Activated T-helper 1 cell treated with anti-CD3 and anti-CD28 coated beads, Interleukin-12 subunit alpha, Interleukin-12 subunit beta, Interleukin-2, Interleukin-4 antibody, amounts not matched to agents 30 ng/mL and 10 ng/mL and 1 ng/mL, durations not matched to agents 14 hours and 24 hours and 36 hours (primary cell): ENCODE measurements at regions of chr2 and their contacts with region 1.

Region 1: DNA sequence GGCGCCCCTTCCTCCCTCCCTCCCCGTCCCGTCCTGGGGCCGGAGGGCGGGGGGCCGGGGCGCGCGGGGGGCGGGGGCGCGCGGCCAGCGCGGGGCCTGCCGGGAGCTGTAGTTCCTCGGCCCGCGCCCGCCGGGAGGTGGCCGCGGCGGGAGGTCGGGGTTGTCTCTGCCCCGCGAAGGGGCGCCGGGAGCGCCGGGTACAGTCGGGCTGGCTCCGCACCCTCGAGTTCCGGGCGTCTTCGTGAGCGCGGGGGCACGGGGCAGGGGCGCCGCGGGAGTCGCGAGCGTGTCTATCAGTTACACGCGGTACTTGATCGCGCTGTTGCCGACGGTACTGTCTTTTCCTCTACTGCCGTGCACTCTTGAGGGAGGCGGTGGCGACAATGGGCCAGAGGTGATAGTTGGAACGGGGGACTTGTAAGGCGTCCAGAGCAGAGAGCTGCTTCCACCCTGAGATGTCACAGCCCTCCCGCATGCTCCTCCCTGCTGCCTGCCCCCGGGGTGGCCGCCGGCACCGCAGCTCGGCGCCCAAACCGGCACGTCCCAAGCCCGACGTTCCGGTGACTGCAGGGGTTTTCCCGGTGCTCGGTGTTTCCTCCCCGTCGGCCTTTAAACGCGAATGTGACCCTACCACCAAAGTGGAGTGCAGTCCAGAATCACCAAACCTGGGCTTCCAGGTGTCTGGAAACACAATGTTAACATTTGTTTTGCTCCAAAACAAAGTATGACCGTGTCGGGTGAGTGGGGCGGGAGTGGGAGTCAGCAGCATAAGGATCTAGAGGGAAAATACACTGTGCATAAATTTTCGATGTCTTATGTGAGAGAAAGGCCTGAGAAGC is at the start of gene PRKD3:
- DNase-seq: peak; percentile 54
- H3K4me3 Mint-ChIP-seq: peak within 1 kb of the TSS; percentile 97
- H3K27ac Mint-ChIP-seq: peak within 1 kb of the TSS; percentile 96
- H3K4me1 Mint-ChIP-seq: peaks cover 37% of the 10 kb centered on the region
- H3K27me3 Mint-ChIP-seq: peaks cover 39% of the 10 kb centered on the region
- total RNA-seq, gene PRKD3: 23.9 and 24.3 TPM in 2 replicates

Region 2: DNA sequence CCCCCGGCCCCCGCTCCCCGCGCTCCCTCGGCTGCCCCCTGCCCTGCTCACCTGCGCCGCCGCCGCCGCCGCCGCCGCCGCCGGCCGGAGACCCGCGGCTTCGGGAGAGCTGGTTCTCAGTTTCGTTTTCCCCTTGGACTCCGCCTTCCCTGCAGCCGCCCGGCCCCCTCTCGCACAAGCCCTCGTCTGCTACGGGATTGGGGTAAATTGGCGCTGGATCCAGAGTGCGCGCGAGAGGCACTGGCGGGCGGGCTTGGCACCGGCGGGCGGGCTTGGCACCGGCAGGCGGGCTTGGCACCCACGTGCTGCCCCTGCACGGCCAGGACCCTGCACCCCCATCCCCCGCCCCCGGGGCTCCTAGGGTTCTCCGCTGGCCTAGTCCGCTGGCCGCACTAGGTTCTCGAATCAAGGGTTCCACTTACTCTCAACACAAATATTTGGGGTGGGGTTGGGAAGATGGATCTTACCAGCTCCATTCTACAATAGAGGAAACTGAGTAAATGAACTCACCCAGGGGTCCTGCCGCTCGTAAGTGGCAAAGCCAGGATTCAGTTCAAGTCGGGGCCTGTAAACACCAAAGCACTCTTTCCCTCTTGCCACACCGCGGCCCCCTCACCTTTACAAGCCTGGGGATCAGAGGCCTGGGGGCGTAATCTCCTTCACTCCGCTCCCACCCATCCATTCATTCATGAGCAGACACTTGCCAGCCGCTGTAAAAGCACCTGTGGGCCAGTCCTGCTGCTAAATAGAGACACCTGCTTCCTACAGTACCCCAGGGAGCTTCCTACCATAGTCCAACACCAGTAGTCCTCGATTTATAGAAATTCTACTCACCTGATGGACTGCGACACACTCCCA is 167.9 kb before region 1 on chr2 and contains the start of gene EIF2AK2:
- intact Hi-C with region 1: loop called (anchors 2 kb)
- DNase-seq: peak; percentile 84
- H3K4me3 Mint-ChIP-seq: peak within 1 kb of the TSS; percentile 89
- H3K27ac Mint-ChIP-seq: peak within 1 kb of the TSS; percentile 93
- H3K4me1 Mint-ChIP-seq: peaks cover 46% of the 10 kb centered on the region
- H3K27me3 Mint-ChIP-seq: no peaks in the 10 kb centered on the region
- total RNA-seq, gene EIF2AK2: 40.5 and 41.9 TPM in 2 replicates

Region 3: GRCh38 chr2:37344453-37345361 is 19.7 kb after region 1 on chr2 and contains the start of gene QPCT:
- intact Hi-C with region 1: loop called (anchors 2 kb)
- DNase-seq: peak; percentile 13
- H3K4me3 Mint-ChIP-seq: peak within 1 kb of the TSS; percentile 76
- H3K27ac Mint-ChIP-seq: no peak within 1 kb of the TSS
- H3K4me1 Mint-ChIP-seq: peaks cover 23% of the 10 kb centered on the region
- H3K27me3 Mint-ChIP-seq: peaks cover 83% of the 10 kb centered on the region
- total RNA-seq, gene QPCT: 1.6 and 3.8 TPM in 2 replicates

Region 4: GRCh38 chr2:37376421-37377186 is 51.6 kb after region 1 on chr2:
- intact Hi-C with region 1: loop called (anchors 1 kb)
- DNase-seq: peak; percentile 29
- H3K4me3 Mint-ChIP-seq: peak overlapping the region; percentile 34
- H3K27ac Mint-ChIP-seq: peak overlapping the region; percentile 88
- H3K4me1 Mint-ChIP-seq: peaks cover 51% of the 10 kb centered on the region
- H3K27me3 Mint-ChIP-seq: peaks cover 51% of the 10 kb centered on the region

Region 5: DNA sequence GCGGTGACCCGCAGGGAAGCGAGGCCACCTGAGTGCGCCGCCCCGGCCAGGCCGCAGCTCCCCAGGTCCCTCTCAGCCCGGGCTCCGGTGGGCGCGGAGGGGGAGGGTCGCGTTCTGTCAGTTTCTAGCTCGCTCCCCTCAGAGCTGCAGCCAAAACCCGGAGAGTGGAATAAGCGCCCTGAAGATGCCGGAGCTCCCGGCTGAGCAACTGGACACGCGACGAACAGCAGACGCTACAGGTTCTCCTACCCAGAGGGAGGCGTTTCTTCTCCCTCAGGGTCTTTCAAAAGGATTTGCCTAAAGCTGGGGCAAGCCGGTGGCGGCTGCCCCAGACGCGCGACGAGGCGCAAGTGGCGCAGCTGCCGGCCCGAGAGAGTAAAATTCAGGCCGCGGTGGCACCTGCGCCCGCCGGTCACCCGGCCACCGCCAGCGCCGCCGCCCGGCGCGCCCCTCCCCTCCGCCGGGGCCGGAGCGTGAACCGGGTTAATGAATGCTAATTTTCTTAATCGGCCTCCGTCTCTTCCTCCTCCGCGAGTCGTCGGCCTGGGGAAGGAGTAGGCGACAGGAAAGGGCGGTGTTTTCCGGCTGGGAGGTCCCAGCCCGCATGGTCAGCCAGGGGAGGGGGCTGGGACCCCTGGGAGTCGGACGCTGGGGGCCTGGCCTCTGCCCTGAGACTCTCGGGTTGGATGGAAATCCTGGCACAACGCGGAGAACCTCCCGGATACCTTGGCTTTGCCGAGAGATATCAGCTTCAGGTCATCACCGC is 347.3 kb after region 1 on chr2:
- intact Hi-C with region 1: loop called (anchors 2 kb)
- DNase-seq: peak; percentile 59
- H3K4me3 Mint-ChIP-seq: peak overlapping the region; percentile 83
- H3K27ac Mint-ChIP-seq: peak overlapping the region; percentile 67
- H3K4me1 Mint-ChIP-seq: peaks cover 38% of the 10 kb centered on the region
- H3K27me3 Mint-ChIP-seq: peaks cover 8% of the 10 kb centered on the region